ENCODE measurements at regions of chr17 and their contacts with region 1.

Region 1: GRCh38 chr17:66906321-66907278 is 57.9 kb upstream of the CACNG4 start:
- DNase-seq: peak; percentile 23 to 71
- H3K4me3 ChIP-seq: no peak overlapping the region
- H3K27ac ChIP-seq: no peak overlapping the region
- H3K4me1 ChIP-seq: no peaks in the 10 kb centered on the region
- H3K27me3 ChIP-seq: no peaks in the 10 kb centered on the region
- CTCF ChIP-seq: peak; percentile 35 to 75 (median 54)

Region 2: DNA sequence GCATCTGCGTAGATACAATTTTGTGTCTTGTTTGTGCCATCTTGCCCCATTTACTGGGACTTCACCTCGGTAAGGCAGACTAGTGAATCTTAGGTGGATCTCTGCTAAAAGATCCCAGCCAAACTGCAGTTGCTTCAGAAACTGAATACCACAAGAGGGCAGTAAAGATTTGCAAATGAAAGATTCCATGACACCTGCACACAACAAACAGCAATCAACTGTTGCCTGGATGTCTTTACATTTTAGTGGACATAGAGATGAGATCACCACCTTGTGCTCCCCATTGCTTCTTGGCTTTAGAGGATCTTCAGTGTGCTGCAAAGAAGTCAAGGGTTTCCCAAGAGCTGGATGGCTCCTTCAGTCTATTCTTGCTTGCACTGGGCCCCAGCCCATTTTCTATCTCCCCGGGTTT is 190.8 kb before region 1 on chr17:
- intact Hi-C with region 1: loop called (anchors 1 kb)
- DNase-seq: no peak
- H3K4me3 ChIP-seq: no peak overlapping the region
- H3K27ac ChIP-seq: no peak overlapping the region
- H3K4me1 ChIP-seq: no peaks in the 10 kb centered on the region
- H3K27me3 ChIP-seq: no peaks in the 10 kb centered on the region
- CTCF ChIP-seq: peak; percentile 52 to 67 (median 65)

Region 3: GRCh38 chr17:66885395-66885794 is 21.2 kb before region 1 on chr17:
- intact Hi-C with region 1: loop called (anchors 1 kb)
- DNase-seq: no peak
- H3K4me3 ChIP-seq: no peak overlapping the region
- H3K27ac ChIP-seq: no peak overlapping the region
- H3K4me1 ChIP-seq: no peaks in the 10 kb centered on the region
- H3K27me3 ChIP-seq: no peaks in the 10 kb centered on the region
- CTCF ChIP-seq: no peak

Region 4: GRCh38 chr17:66964930-66965800 is 58.6 kb after region 1 on chr17:
- intact Hi-C with region 1: no loop called
- DNase-seq: no peak
- H3K4me3 ChIP-seq: peak overlapping the region; percentile 48 to 60
- H3K27ac ChIP-seq: no peak overlapping the region
- H3K4me1 ChIP-seq: peaks cover 0 to 3% of the 10 kb centered on the region in 2 donors
- H3K27me3 ChIP-seq: peaks cover 8% of the 10 kb centered on the region
- CTCF ChIP-seq: no peak

Measured in ascending aorta (tissue), 2 donors.